ENCODE measurements at regions of chr2 and their contacts with region 1.

Region 1: GRCh38 chr2:189466660-189467059 is 25.4 kb downstream of the WDR75 start:
- H3K4me3 Mint-ChIP-seq: no peak overlapping the region
- H3K27ac Mint-ChIP-seq: no peak overlapping the region
- H3K4me1 Mint-ChIP-seq: peaks cover 10% of the 10 kb centered on the region
- H3K27me3 Mint-ChIP-seq: no peaks in the 10 kb centered on the region

Region 2: GRCh38 chr2:189454009-189454408 is 12.7 kb before region 1 on chr2:
- intact Hi-C with region 1: no loop called
- H3K4me3 Mint-ChIP-seq: no peak overlapping the region
- H3K27ac Mint-ChIP-seq: no peak overlapping the region
- H3K4me1 Mint-ChIP-seq: no peaks in the 10 kb centered on the region
- H3K27me3 Mint-ChIP-seq: no peaks in the 10 kb centered on the region

Region 3: GRCh38 chr2:189633392-189633811 is 166.7 kb after region 1 on chr2:
- intact Hi-C with region 1: loop called (anchors 1 kb)
- H3K4me3 Mint-ChIP-seq: no peak overlapping the region
- H3K27ac Mint-ChIP-seq: no peak overlapping the region
- H3K4me1 Mint-ChIP-seq: no peaks in the 10 kb centered on the region
- H3K27me3 Mint-ChIP-seq: no peaks in the 10 kb centered on the region